Panc1 (cell line): ENCODE measurements at regions of chr20 and their contacts with region 1.

Region 1: DNA sequence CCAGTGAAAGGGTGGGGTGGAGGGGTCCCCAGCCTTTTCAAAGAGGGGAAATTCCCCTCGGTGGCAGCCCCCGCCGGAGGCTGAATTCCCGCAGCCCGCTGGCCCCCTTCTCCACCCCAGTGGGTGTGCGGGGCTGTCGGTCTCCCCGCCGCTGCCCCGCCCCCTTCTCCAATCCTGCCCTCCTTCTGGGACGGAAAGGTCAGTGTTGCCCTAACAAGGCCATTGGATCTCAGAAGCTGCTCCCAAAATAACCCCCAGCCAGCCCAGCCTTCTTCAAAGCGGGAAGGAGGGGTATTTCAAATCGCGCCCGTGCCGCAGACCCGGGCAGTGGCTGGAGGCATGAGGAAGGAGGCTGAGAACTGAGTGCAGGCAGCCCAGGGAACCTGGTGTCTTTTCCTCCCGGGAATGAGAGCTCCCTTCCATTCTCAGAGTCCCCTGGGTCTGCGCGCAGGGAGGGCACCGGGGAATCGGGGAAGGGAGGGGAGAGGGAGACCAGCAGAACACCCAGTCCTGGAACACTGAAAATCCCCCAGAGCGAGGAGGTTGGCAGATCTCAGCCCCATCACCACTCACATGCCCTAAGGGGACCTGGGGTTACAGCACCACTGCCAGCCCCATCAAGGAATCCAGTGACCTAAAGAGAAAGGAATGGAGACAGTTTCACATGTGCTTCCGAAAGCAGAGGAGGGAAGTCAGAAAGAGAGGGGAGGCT is at the start of gene JPH2:
- DNase-seq: no peak
- ATAC-seq: peak; percentile 80
- H3K4me3 ChIP-seq: peak within 1 kb of the TSS; percentile 43 to 69
- H3K27ac ChIP-seq: peak within 1 kb of the TSS; percentile 58
- H3K4me1 ChIP-seq: peaks cover 9% of the 10 kb centered on the region
- H3K27me3 ChIP-seq: no peaks in the 10 kb centered on the region
- CTCF ChIP-seq: no peak
- total RNA-seq, gene JPH2: 0.49 TPM

Region 2: GRCh38 chr20:44115762-44116644 is 71.2 kb before region 1 on chr20:
- CTCF ChIA-PET with region 1: interaction called, 63 read pairs
- POLR2A ChIA-PET with region 1: no interaction called
- in situ Hi-C with region 1: no loop called
- intact Hi-C with region 1: loop called (anchors 1 kb)
- DNase-seq: no peak
- ATAC-seq: peak; percentile 51
- H3K4me3 ChIP-seq: no peak overlapping the region
- H3K27ac ChIP-seq: no peak overlapping the region
- H3K4me1 ChIP-seq: no peaks in the 10 kb centered on the region
- H3K27me3 ChIP-seq: no peaks in the 10 kb centered on the region
- CTCF ChIP-seq: no peak

Region 3: GRCh38 chr20:44501448-44501847 is 314.2 kb after region 1 on chr20:
- CTCF ChIA-PET with region 1: no interaction called
- POLR2A ChIA-PET with region 1: no interaction called
- in situ Hi-C with region 1: no loop called
- intact Hi-C with region 1: no loop called
- DNase-seq: no peak
- ATAC-seq: no peak
- H3K4me3 ChIP-seq: no peak overlapping the region
- H3K27ac ChIP-seq: no peak overlapping the region
- H3K4me1 ChIP-seq: no peaks in the 10 kb centered on the region
- H3K27me3 ChIP-seq: no peaks in the 10 kb centered on the region
- CTCF ChIP-seq: no peak